HEK293 (cell line): ENCODE measurements at regions of chr5 and their contacts with region 1.

Region 1: DNA sequence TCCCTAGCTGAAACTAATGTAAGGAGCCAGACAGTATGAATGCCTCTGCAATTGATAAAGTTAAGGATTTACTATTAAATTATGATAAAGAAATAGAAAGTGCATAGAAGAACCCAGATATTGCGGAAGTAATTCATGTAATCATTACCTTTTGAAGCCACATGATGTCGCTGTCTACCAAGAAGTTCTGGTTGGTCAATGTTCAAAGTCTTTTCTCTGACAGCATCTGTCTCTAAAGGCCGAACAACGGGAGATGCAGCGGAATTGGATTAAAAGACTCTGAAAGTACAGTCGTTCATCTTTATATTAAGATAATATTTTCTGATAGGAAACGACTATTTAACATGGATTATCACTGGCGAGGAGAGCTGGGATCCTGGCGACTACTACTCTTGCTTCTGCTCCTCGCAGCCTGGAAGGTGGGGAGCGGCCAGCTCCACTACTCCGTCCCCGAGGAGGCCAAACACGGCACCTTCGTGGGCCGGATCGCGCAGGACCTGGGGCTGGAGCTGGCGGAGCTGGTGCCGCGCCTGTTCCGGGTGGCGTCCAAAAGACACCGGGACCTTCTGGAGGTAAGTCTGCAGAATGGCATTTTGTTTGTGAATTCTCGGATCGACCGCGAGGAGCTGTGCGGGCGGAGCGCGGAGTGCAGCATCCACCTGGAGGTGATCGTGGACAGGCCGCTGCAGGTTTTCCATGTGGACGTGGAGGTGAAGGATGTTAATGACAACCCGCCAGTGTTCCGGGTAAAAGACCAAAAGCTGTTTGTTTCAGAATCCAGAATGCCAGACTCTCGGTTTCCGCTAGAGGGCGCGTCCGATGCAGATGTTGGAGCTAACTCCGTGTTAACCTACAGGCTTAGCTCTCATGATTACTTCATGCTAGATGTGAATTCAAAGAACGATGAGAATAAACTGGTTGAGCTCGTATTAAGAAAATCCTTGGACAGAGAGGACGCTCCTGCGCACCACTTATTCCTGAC is at the start of gene PCDHA8:
- H3K4me3 ChIP-seq: no peak within 1 kb of the TSS
- H3K27ac ChIP-seq: no peak within 1 kb of the TSS
- H3K4me1 ChIP-seq: no peaks in the 10 kb centered on the region
- CTCF ChIP-seq: no peak

Region 2: GRCh38 chr5:140821375-140822280 is 19.6 kb before region 1 on chr5 and contains the start of gene PCDHA5:
- CTCF ChIA-PET with region 1: interaction called, 16 read pairs
- POLR2A ChIA-PET with region 1: no interaction called
- H3K4me3 ChIP-seq: no peak within 1 kb of the TSS
- H3K27ac ChIP-seq: no peak within 1 kb of the TSS
- H3K4me1 ChIP-seq: no peaks in the 10 kb centered on the region
- CTCF ChIP-seq: no peak

Region 3: GRCh38 chr5:140855772-140856674 is 14.8 kb after region 1 on chr5 and contains the start of gene PCDHA10:
- CTCF ChIA-PET with region 1: interaction called, 16 read pairs
- POLR2A ChIA-PET with region 1: no interaction called
- H3K4me3 ChIP-seq: peak within 1 kb of the TSS; percentile 10
- H3K27ac ChIP-seq: no peak within 1 kb of the TSS
- H3K4me1 ChIP-seq: no peaks in the 10 kb centered on the region
- CTCF ChIP-seq: no peak

Region 4: DNA sequence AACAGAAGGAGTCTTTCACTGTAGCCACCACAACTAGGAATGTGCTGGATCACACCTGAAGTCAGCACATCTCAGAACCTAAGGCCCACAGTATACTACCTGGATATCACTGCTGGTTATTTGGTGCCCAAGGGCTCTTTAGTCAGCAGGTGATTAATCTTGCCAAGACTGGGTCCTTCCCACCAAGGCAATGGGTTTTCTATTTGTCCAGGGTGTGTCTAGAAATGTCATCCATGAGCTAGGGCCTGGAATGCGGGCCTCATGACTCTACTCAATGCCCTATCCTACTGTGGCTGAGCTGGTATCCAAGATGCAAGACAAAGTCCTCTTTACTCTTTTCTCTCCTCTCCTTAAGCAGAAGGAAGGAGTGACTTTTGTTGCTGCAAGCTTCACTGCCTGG is 75.1 kb after region 1 on chr5:
- CTCF ChIA-PET with region 1: no interaction called
- POLR2A ChIA-PET with region 1: no interaction called
- H3K4me3 ChIP-seq: no peak overlapping the region
- H3K27ac ChIP-seq: no peak overlapping the region
- H3K4me1 ChIP-seq: no peaks in the 10 kb centered on the region
- CTCF ChIP-seq: no peak

Region 5: GRCh38 chr5:140966293-140967225 is 125.3 kb after region 1 on chr5 and contains the start of gene PCDHAC2:
- CTCF ChIA-PET with region 1: no interaction called
- POLR2A ChIA-PET with region 1: no interaction called
- H3K4me3 ChIP-seq: peak within 1 kb of the TSS; percentile 55
- H3K27ac ChIP-seq: peak within 1 kb of the TSS; percentile 47; the same call in 1 of the 2 replicates
- H3K4me1 ChIP-seq: peaks cover 5% of the 10 kb centered on the region; the same call in 1 of the 2 replicates
- CTCF ChIP-seq: no peak